Activated CD4-positive, alpha-beta memory T cell treated with anti-CD3 and anti-CD28 coated beads for 36 hours (primary cell): ENCODE measurements at regions of chr22 and their contacts with region 1.

Region 1: GRCh38 chr22:32474635-32475467 is at the start of gene FBXO7:
- DNase-seq: peak; percentile 90
- H3K4me3 Mint-ChIP-seq: peak within 1 kb of the TSS; percentile 85
- H3K27ac Mint-ChIP-seq: peak within 1 kb of the TSS; percentile 90
- H3K4me1 Mint-ChIP-seq: peaks cover 21% of the 10 kb centered on the region
- H3K27me3 Mint-ChIP-seq: no peaks in the 10 kb centered on the region
- total RNA-seq, gene FBXO7: 79.5 to 83.3 TPM

Region 2: GRCh38 chr22:31749636-31750364 is 725.1 kb before region 1 on chr22 and contains the start of gene PRR14L:
- CTCF ChIA-PET with region 1: no interaction called
- POLR2A ChIA-PET with region 1: no interaction called
- intact Hi-C with region 1: loop called (anchors 5 kb)
- DNase-seq: peak; percentile 99
- H3K4me3 Mint-ChIP-seq: peak within 1 kb of the TSS; percentile 80
- H3K27ac Mint-ChIP-seq: peak within 1 kb of the TSS; percentile 70
- H3K4me1 Mint-ChIP-seq: peaks cover 50% of the 10 kb centered on the region
- H3K27me3 Mint-ChIP-seq: no peaks in the 10 kb centered on the region
- total RNA-seq, gene PRR14L: 41.3 to 45.2 TPM

Region 3: DNA sequence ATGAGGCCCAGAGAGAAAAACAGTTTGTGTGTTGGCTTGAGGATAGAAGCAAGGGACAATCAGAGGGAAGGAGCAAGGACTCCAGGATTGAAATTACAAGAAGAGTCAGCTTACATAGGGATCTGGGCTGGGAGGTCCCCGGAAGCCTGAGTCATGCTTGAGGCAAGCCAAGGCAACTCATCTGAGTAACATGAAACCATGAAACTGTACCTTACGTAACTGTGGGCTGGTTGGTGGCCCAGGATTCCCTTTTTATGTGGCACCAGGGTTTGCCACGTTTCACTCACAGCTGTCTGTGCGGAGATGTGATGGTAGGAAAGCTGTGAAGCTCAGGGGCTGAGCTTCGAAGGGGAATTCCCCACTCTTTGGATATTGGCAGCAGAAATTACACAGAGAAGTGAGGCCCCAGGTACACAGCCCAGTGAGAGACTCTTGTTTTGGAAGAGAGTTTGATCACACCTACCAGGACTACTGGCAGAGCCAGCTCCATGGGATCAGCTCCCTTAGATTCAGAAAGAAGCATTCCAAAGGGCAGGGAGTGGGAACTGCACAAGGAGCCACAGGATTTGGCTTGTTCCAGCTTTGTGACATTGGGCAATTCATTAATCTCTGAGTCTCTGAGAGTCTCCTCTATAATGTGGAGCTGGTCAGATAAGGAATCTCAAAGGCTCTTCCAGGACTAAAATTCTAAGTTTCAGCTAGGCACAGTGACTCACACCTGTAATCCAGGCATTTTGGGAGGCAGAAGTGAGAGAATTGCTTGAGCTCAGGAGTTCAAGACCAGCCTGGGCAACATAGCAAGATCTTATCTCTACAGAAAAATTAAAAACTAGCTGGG is 424.0 kb before region 1 on chr22:
- CTCF ChIA-PET with region 1: no interaction called
- POLR2A ChIA-PET with region 1: interaction called, 3 read pairs
- intact Hi-C with region 1: loop called (anchors 2 kb)
- DNase-seq: peak; percentile 94
- H3K4me3 Mint-ChIP-seq: no peak overlapping the region
- H3K27ac Mint-ChIP-seq: peak overlapping the region; percentile 26
- H3K4me1 Mint-ChIP-seq: peaks cover 20% of the 10 kb centered on the region
- H3K27me3 Mint-ChIP-seq: peaks cover 52% of the 10 kb centered on the region

Region 4: GRCh38 chr22:32202539-32203180 is 272.2 kb before region 1 on chr22:
- CTCF ChIA-PET with region 1: interaction called, 8 read pairs
- POLR2A ChIA-PET with region 1: no interaction called
- intact Hi-C with region 1: loop called (anchors 1 kb)
- DNase-seq: peak; percentile 60
- H3K4me3 Mint-ChIP-seq: peak overlapping the region; percentile 70
- H3K27ac Mint-ChIP-seq: no peak overlapping the region
- H3K4me1 Mint-ChIP-seq: peaks cover 48% of the 10 kb centered on the region
- H3K27me3 Mint-ChIP-seq: peaks cover 6% of the 10 kb centered on the region

Region 5: DNA sequence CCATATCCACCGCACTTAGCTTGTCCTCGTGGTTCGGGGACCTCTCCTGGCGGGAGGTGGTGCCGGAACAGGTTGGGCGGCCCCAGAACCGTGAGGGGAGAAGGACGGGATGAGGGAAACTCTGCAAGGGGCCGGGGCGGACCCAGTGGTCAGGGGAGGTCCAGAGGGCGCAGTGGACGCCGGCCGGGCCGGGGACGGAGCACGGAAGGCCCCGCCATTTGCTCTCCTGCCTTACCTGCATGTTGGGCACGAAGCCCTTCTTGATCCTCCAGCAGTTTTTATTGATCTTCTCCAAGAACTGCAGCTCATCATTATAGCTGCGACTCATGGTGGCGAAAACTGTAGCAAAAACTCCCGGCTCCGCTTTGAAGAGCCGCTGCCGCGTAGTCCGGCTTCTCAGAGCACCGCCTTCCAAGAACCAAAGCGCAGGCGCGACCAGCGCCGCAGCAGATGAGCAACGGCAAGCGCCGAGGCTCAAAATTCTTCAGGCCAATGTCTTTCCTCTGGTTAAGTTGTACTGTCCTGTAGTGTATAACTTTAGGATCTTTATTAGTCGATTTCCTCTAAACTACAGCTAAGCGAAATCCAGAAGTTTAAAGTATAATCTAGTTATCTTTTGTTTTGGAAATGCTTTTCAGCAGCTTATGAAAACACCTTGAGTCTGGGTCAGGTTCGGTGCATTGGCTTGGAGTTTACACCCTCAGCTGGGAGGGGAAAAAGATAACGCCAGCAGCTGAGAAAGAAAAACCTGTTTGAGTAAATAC is 62.8 kb before region 1 on chr22 and contains the start of gene RTCB:
- CTCF ChIA-PET with region 1: interaction called, 33 read pairs
- POLR2A ChIA-PET with region 1: interaction called, 22 read pairs
- intact Hi-C with region 1: loop called (anchors 1 kb)
- DNase-seq: peak; percentile 95
- H3K4me3 Mint-ChIP-seq: peak within 1 kb of the TSS; percentile 94
- H3K27ac Mint-ChIP-seq: peak within 1 kb of the TSS; percentile 90
- H3K4me1 Mint-ChIP-seq: peaks cover 51% of the 10 kb centered on the region
- H3K27me3 Mint-ChIP-seq: peaks cover 2% of the 10 kb centered on the region
- total RNA-seq, gene RTCB: 87.0 to 87.7 TPM

Region 6: GRCh38 chr22:32723643-32724042 is 248.8 kb after region 1 on chr22:
- CTCF ChIA-PET with region 1: no interaction called
- POLR2A ChIA-PET with region 1: no interaction called
- intact Hi-C with region 1: no loop called
- DNase-seq: peak; percentile 61
- H3K4me3 Mint-ChIP-seq: no peak overlapping the region
- H3K27ac Mint-ChIP-seq: no peak overlapping the region
- H3K4me1 Mint-ChIP-seq: peaks cover 26% of the 10 kb centered on the region
- H3K27me3 Mint-ChIP-seq: peaks cover 3% of the 10 kb centered on the region